Activated CD8-positive, alpha-beta T cell treated with anti-CD3 and anti-CD28 coated beads for 36 hours (primary cell): ENCODE measurements at regions of chr12 and their contacts with region 1.

Region 1: DNA sequence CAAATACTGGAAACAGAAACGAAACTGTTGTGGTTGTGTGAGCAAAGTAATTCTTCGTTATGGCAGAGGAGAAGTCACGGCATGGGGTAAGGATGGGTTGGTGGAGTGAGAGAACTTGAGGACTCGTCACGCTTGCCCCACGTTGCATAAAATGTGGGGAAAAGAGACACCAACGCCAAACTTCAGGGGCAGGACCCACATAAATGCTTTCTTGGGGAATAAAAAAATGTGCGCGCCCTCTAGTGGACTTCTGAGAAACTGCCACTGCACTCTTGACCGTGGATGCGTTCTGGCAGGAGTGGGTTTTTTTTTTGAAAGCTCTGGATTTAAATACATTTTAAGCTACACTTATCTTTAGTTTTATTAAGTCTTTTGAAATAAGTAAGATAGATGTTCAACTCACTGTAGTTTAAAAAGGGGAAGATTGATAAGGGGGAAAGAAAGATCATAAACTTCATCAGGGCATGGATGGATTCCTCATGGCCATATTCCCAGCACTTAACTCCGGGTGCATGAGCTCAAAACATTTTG is 4.1 kb upstream of the IGF1 start:
- DNase-seq: peak; percentile 85
- ATAC-seq: peak; percentile 86
- H3K4me3 Mint-ChIP-seq: peak overlapping the region; percentile 52
- H3K27ac Mint-ChIP-seq: peak overlapping the region; percentile 91
- H3K4me1 Mint-ChIP-seq: peaks cover 30% of the 10 kb centered on the region
- H3K27me3 Mint-ChIP-seq: no peaks in the 10 kb centered on the region
- CTCF ChIP-seq: peak; percentile 86

Region 2: DNA sequence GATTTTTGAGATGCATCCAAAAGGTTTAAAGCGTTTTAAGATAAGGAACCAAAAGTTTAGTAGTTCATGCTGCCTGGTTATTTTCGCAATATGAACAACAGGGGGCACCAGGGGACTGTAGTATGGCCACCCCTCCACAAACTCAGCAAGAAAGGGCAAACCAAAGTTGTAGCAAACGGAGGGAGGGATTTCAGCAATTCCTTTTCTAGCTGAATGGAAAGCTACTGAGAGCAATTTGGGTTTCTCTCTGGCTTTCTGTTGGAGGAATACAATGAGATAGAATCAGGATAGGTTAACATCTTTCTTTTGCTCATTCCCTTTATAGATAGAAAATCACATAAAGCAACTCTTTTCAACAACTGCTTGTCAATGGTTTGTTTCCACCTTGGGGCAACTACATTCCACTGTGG is 544.6 kb before region 1 on chr12:
- CTCF ChIA-PET with region 1: interaction called, 4 read pairs
- POLR2A ChIA-PET with region 1: no interaction called
- intact Hi-C with region 1: loop called (anchors 10 kb)
- DNase-seq: peak; percentile 75
- ATAC-seq: peak; percentile 69
- H3K4me3 Mint-ChIP-seq: no peak overlapping the region
- H3K27ac Mint-ChIP-seq: no peak overlapping the region
- H3K4me1 Mint-ChIP-seq: no peaks in the 10 kb centered on the region
- H3K27me3 Mint-ChIP-seq: peaks cover 14% of the 10 kb centered on the region
- CTCF ChIP-seq: peak; percentile 83

Region 3: GRCh38 chr12:102169922-102170621 is 314.4 kb before region 1 on chr12:
- CTCF ChIA-PET with region 1: interaction called, 4 read pairs
- POLR2A ChIA-PET with region 1: no interaction called
- intact Hi-C with region 1: loop called (anchors 10 kb)
- DNase-seq: peak; percentile 26
- ATAC-seq: peak; percentile 82
- H3K4me3 Mint-ChIP-seq: no peak overlapping the region
- H3K27ac Mint-ChIP-seq: no peak overlapping the region
- H3K4me1 Mint-ChIP-seq: peaks cover 11% of the 10 kb centered on the region
- H3K27me3 Mint-ChIP-seq: no peaks in the 10 kb centered on the region
- CTCF ChIP-seq: peak; percentile 69

Region 4: DNA sequence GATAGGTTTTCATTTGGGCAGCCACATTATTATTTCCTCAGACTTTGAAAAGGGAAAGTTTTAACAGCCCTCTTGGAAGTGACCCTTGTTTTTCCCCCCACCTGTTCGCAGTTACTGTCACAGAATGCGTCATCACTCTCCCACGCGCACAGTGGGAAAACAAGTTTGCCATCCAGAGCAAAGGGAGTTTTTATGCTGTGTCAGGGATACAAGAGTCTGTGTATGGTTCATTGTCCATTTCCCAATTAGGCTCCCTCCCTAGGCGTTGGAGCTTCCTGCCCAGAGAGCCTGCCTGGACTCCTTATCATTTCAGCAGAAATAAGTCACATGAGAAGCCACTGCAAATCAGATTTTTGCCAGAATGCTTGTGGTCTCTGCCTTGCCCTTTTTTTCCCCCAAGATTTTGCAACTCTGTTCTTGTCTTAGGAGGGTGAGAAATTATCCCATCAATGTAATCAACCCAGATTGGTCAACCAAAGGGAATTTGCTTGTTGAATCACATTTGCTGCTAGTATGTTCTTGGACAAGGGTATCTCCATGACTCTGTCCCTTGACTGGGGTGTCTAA is 108.2 kb before region 1 on chr12:
- CTCF ChIA-PET with region 1: no interaction called
- POLR2A ChIA-PET with region 1: no interaction called
- intact Hi-C with region 1: loop called (anchors 10 kb)
- DNase-seq: peak; percentile 15
- ATAC-seq: no peak
- H3K4me3 Mint-ChIP-seq: no peak overlapping the region
- H3K27ac Mint-ChIP-seq: no peak overlapping the region
- H3K4me1 Mint-ChIP-seq: peaks cover 8% of the 10 kb centered on the region
- H3K27me3 Mint-ChIP-seq: peaks cover 2% of the 10 kb centered on the region
- CTCF ChIP-seq: no peak